ENCODE measurements at regions of chr3 and their contacts with region 1.

Region 1: DNA sequence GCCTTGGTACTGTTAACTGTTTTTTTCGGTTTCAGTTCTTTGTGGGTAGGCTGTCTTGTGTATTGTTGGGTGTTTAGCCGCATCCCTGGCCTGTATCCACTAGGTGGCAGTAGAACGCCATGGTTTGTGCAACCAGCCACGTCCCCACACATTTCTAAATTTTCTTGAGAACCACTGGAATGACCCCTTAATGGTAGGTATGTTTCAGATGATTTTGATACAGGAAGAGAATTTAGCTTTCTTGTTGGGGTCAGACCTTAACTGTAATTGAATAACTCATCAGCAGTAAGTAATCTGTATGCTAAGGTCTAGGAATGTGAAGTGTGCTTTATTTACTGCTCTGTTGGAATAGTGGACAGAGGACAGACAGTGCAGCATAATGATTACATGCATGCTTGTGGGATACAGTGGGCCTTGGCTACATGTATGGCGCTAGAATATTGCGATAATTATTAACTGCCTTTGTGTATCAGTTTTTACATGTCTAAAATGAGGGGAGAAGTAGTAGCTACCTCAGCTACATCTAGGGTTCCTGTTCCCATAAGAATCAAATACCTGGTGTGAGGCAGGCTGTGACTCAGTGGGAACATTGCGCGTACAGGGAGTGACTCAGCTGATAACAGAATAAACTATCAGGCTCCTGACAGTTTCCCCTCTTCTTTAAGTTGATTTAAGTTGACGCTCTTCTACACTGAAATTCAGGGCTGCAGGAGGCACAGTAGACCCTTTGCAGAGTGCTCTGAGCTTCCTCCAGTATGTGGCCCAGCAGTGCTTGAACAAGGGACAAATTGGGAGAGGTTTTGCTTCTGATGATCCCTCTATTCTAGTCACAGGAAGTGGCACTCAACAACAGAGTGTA is 25.0 kb upstream of the GPR171 start:
- DNase-seq: peak; percentile 90
- ATAC-seq: peak; percentile 85
- H3K4me3 ChIP-seq: no peak overlapping the region
- H3K4me3 Mint-ChIP-seq: no peak overlapping the region
- H3K27ac ChIP-seq: peak overlapping the region; percentile 25 to 58
- H3K27ac Mint-ChIP-seq: peak overlapping the region; percentile 86
- H3K4me1 ChIP-seq: peaks cover 39 to 40% of the 10 kb centered on the region in 2 donors
- H3K4me1 Mint-ChIP-seq: peaks cover 39% of the 10 kb centered on the region
- H3K27me3 ChIP-seq: no peaks in the 10 kb centered on the region
- H3K27me3 Mint-ChIP-seq: no peaks in the 10 kb centered on the region
- CTCF ChIP-seq: peak; percentile 91

Region 2: GRCh38 chr3:150675587-150675986 is 552.4 kb before region 1 on chr3:
- CTCF ChIA-PET with region 1: no interaction called
- POLR2A ChIA-PET with region 1: no interaction called
- intact Hi-C with region 1: no loop called
- DNase-seq: no peak
- ATAC-seq: no peak
- H3K4me3 ChIP-seq: no peak overlapping the region
- H3K4me3 Mint-ChIP-seq: no peak overlapping the region
- H3K27ac ChIP-seq: no peak overlapping the region
- H3K27ac Mint-ChIP-seq: no peak overlapping the region
- H3K4me1 ChIP-seq: peaks cover 5 to 10% of the 10 kb centered on the region in 2 donors
- H3K4me1 Mint-ChIP-seq: peaks cover 4% of the 10 kb centered on the region
- H3K27me3 ChIP-seq: no peaks in the 10 kb centered on the region
- H3K27me3 Mint-ChIP-seq: no peaks in the 10 kb centered on the region
- CTCF ChIP-seq: no peak

Region 3: DNA sequence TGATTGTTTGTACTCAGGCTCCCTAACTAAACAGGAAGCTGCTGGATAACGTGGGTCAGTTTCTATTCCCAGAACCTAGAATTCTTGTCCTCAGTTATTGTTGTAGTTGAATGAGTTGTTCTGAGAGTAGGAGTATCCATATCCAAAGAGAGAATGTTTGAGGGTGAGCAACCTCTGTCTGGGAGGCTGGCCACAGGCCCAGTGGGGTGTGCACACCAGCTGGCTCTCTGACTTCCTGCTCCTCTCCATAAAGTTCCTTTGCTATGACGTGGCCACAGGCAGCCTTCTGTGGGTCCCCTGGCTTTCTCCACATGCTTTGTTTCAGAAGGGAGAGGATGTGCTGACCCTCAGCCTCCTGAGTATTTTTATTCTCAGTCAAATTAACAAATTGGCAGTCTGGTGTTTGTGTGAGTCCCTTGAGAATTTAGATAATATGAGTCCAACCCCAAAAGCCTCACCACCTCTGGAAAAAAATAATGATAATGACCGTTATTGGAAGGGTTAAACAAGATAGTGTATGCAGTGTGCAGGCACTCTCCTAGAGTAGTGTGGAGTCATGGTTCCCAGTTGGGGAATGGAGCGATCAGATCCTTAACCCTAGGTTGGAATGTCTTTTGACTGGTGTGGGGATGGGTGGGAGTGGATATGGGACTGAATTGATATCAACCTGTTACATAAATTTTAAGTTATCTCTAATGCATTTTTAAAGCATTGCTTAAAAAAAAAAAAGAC is 190.1 kb before region 1 on chr3:
- CTCF ChIA-PET with region 1: no interaction called
- POLR2A ChIA-PET with region 1: no interaction called
- intact Hi-C with region 1: no loop called
- DNase-seq: no peak
- ATAC-seq: no peak
- H3K4me3 ChIP-seq: no peak overlapping the region
- H3K4me3 Mint-ChIP-seq: no peak overlapping the region
- H3K27ac ChIP-seq: no peak overlapping the region
- H3K27ac Mint-ChIP-seq: no peak overlapping the region
- H3K4me1 ChIP-seq: no peaks in the 10 kb centered on the region
- H3K4me1 Mint-ChIP-seq: no peaks in the 10 kb centered on the region
- H3K27me3 ChIP-seq: peaks cover 0 to 2% (median 0%) of the 10 kb centered on the region in 4 experiments
- H3K27me3 Mint-ChIP-seq: peaks cover 2% of the 10 kb centered on the region
- CTCF ChIP-seq: no peak

Region 4: GRCh38 chr3:151168269-151169094 is 59.6 kb before region 1 on chr3:
- CTCF ChIA-PET with region 1: interaction called, 137 read pairs
- POLR2A ChIA-PET with region 1: no interaction called
- intact Hi-C with region 1: loop called (anchors 1 kb)
- DNase-seq: peak; percentile 69
- ATAC-seq: peak; percentile 31
- H3K4me3 ChIP-seq: no peak overlapping the region
- H3K4me3 Mint-ChIP-seq: no peak overlapping the region
- H3K27ac ChIP-seq: no peak overlapping the region
- H3K27ac Mint-ChIP-seq: no peak overlapping the region
- H3K4me1 ChIP-seq: peaks cover 35 to 38% of the 10 kb centered on the region in 2 donors
- H3K4me1 Mint-ChIP-seq: peaks cover 33% of the 10 kb centered on the region
- H3K27me3 ChIP-seq: no peaks in the 10 kb centered on the region
- H3K27me3 Mint-ChIP-seq: no peaks in the 10 kb centered on the region
- CTCF ChIP-seq: peak; percentile 79

Region 5: DNA sequence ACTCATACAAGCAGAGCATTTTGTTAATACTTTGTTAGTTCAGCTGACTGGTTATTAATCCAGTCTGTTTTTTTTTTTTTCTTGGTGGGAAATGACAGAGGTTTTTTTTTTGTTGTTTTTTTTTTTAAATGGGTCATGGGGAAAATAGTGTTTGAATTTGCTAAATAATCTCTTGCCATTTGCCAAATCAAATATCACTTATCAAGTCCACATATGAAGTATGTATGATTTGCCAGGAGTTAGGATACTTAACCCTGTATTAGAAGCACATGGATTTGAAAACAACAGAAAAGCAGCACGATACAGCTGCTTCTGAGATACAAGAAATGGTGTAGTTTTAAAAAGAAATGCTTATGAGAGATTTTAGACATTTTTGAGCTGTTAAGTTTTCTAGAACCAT is 28.7 kb after region 1 on chr3:
- CTCF ChIA-PET with region 1: interaction called, 105 read pairs
- POLR2A ChIA-PET with region 1: no interaction called
- intact Hi-C with region 1: no loop called
- DNase-seq: no peak
- ATAC-seq: no peak
- H3K4me3 ChIP-seq: no peak overlapping the region
- H3K4me3 Mint-ChIP-seq: no peak overlapping the region
- H3K27ac ChIP-seq: no peak overlapping the region
- H3K27ac Mint-ChIP-seq: no peak overlapping the region
- H3K4me1 ChIP-seq: no peaks in the 10 kb centered on the region
- H3K4me1 Mint-ChIP-seq: peaks cover 4% of the 10 kb centered on the region
- H3K27me3 ChIP-seq: no peaks in the 10 kb centered on the region
- H3K27me3 Mint-ChIP-seq: no peaks in the 10 kb centered on the region
- CTCF ChIP-seq: no peak

Region 6: DNA sequence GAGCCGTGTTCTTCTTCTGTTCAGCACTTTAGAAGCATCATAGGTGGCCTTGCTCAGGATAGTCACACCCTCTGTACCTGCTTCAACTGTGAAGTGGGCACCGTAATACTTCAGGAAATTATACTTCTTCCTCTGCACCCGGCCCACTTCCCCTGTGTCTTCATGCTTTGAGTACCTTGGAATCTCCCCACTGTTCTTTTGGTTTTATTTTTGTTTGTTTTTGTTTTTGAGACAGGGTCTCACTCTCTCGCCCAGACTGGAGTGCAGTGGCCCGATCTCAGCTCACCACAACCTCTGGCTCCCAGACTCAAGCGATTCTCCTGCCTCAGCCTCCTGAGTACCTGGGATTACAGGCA is 48.6 kb after region 1 on chr3:
- CTCF ChIA-PET with region 1: interaction called, 460 read pairs
- POLR2A ChIA-PET with region 1: interaction called, 52 read pairs
- intact Hi-C with region 1: loop called (anchors 1 kb)
- DNase-seq: peak; percentile 89
- ATAC-seq: peak; percentile 70
- H3K4me3 ChIP-seq: peak overlapping the region in 4 of 5 experiments; percentile 19 to 57 (median 48)
- H3K4me3 Mint-ChIP-seq: peak overlapping the region; percentile 82
- H3K27ac ChIP-seq: peak overlapping the region; percentile 91 to 96
- H3K27ac Mint-ChIP-seq: peak overlapping the region; percentile 98
- H3K4me1 ChIP-seq: peaks cover 69 to 76% of the 10 kb centered on the region in 2 donors
- H3K4me1 Mint-ChIP-seq: peaks cover 78% of the 10 kb centered on the region
- H3K27me3 ChIP-seq: no peaks in the 10 kb centered on the region
- H3K27me3 Mint-ChIP-seq: no peaks in the 10 kb centered on the region
- CTCF ChIP-seq: no peak

Region 7: GRCh38 chr3:151327571-151328198 is 99.6 kb after region 1 on chr3:
- CTCF ChIA-PET with region 1: interaction called, 26 read pairs
- POLR2A ChIA-PET with region 1: no interaction called
- intact Hi-C with region 1: no loop called
- DNase-seq: peak; percentile 33
- ATAC-seq: no peak
- H3K4me3 ChIP-seq: peak overlapping the region in 1 of 5 experiments; percentile 82
- H3K4me3 Mint-ChIP-seq: no peak overlapping the region
- H3K27ac ChIP-seq: no peak overlapping the region
- H3K27ac Mint-ChIP-seq: peak overlapping the region; percentile 75
- H3K4me1 ChIP-seq: peaks cover 7 to 8% of the 10 kb centered on the region in 2 donors
- H3K4me1 Mint-ChIP-seq: peaks cover 26% of the 10 kb centered on the region
- H3K27me3 ChIP-seq: no peaks in the 10 kb centered on the region
- H3K27me3 Mint-ChIP-seq: no peaks in the 10 kb centered on the region
- CTCF ChIP-seq: peak; percentile 81

Region 8: DNA sequence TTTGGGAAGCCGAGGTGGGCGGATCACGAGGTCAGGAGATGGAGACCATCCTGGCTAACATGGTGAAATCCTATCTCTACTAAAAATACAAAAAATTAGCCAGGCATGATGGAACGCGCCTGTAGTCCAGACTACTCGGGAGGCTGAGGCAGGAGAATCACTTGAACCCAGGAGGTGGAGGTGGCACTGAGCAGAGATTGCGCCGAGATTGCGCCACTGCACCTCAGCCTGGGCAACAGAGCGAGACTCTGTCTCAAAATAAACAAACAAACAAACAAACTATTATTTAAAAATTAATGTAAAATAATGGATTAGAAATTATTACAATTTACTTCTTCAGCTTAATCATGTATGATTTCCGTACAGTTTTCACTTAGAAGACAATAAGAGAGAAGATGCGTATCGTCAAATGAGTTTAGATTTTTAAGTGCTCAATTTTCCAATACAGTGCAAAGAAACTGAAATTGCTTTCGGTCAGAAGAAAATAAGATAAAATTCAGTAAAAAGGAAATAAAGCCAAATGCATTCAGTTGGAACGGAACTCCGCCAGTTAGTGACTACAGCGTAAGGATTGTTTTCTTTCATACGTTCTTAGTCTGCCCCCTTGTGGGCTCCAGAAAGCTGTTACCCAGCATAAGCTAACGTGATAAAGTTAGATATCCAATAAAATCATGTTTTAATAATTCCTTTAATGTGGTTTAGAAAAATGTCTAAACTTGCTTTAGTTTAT is 610.7 kb after region 1 on chr3:
- CTCF ChIA-PET with region 1: interaction called, 9 read pairs
- POLR2A ChIA-PET with region 1: no interaction called
- intact Hi-C with region 1: loop called (anchors 1 kb)
- DNase-seq: peak; percentile 69
- ATAC-seq: peak; percentile 65
- H3K4me3 ChIP-seq: no peak overlapping the region
- H3K4me3 Mint-ChIP-seq: no peak overlapping the region
- H3K27ac ChIP-seq: no peak overlapping the region
- H3K27ac Mint-ChIP-seq: no peak overlapping the region
- H3K4me1 ChIP-seq: no peaks in the 10 kb centered on the region
- H3K4me1 Mint-ChIP-seq: peaks cover 3% of the 10 kb centered on the region
- H3K27me3 ChIP-seq: no peaks in the 10 kb centered on the region
- H3K27me3 Mint-ChIP-seq: peaks cover 5% of the 10 kb centered on the region
- CTCF ChIP-seq: peak; percentile 83

Measured in B cell (primary cell).